ENCODE measurements at regions of chr16 and their contacts with region 1.

Region 1: DNA sequence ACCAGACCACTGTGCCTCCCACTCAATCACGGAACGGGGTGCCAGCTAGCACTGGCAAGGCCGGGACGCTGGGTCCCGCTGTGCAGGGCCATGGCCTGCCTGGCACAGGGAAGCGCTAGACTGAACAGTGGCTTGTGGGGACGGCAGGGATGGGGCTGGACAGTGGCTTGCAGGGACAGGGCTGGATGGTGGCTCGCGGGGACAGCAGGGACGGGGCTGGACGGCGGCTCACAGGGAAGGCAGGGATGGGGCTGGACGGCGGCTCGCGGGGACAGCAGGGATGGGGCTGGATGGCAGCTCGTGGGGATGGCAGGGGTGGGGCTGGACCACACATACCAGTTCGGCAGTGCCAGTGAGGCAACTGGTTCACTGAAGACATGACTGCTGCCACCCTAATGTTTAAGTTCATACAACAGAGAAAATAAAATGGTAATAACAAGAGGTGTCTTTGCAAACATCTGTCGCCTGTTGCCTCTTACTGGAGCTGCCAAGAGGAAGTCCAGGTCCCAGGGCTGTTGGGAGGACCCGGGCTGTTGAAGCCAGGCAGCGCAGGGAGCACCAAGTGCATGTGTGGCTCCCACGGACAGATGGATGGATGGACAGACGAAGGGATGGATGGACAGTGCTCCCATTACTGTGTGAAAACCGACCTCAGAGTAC is 32.5 kb downstream of the LMF1 start:
- DNase-seq: no peak

Region 2: GRCh38 chr16:877991-878784 is 60.1 kb before region 1 on chr16:
- intact Hi-C with region 1: no loop called
- DNase-seq: no peak

Region 3: GRCh38 chr16:997440-998051 is 59.3 kb after region 1 on chr16:
- intact Hi-C with region 1: no loop called
- DNase-seq: no peak

Region 4: GRCh38 chr16:1014771-1015495 is 76.7 kb after region 1 on chr16:
- intact Hi-C with region 1: no loop called
- DNase-seq: no peak

Region 5: DNA sequence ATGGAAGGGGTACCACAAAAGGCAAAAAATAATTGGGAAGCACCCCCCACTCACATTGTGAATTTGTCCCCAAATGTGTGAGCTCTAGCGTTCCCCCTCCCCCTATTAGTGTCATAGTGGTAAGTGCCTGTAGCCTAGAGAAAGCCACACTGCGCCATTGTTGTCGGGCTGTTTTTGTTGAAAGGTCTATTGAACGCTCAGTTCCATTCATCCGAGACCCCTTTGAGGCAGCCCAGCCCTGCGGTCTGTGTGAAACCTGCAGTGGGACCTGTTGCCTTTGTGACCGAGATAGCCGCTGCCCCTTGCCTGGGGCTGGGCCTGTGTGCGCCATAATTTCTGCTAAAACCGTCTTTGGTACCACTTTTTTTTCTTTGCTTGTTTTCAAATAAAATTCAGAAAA is 742.8 kb after region 1 on chr16:
- intact Hi-C with region 1: loop called in 1 of 2 experiments (anchors 5 kb)
- DNase-seq: peak; percentile 51

Measured in posterior vena cava (tissue), 2 donors.